ENCODE measurements at regions of chr5 and their contacts with region 1.

Region 1: GRCh38 chr5:149852641-149853330 is 91.8 kb downstream of the PDE6A start:
- DNase-seq: peak; percentile 76 to 77
- ATAC-seq: peak; percentile 86 to 94
- H3K4me3 ChIP-seq: no peak overlapping the region
- H3K27ac ChIP-seq: peak overlapping the region; percentile 34 to 42; a peak in 2 of 6 replicates
- H3K4me1 ChIP-seq: peaks cover 13% of the 10 kb centered on the region
- CTCF ChIP-seq: peak; percentile 89
- EP300 ChIP-seq: no peak
- POLR2A ChIP-seq: no peak
- RAD21 ChIP-seq: peak; percentile 62 to 70

Region 2: DNA sequence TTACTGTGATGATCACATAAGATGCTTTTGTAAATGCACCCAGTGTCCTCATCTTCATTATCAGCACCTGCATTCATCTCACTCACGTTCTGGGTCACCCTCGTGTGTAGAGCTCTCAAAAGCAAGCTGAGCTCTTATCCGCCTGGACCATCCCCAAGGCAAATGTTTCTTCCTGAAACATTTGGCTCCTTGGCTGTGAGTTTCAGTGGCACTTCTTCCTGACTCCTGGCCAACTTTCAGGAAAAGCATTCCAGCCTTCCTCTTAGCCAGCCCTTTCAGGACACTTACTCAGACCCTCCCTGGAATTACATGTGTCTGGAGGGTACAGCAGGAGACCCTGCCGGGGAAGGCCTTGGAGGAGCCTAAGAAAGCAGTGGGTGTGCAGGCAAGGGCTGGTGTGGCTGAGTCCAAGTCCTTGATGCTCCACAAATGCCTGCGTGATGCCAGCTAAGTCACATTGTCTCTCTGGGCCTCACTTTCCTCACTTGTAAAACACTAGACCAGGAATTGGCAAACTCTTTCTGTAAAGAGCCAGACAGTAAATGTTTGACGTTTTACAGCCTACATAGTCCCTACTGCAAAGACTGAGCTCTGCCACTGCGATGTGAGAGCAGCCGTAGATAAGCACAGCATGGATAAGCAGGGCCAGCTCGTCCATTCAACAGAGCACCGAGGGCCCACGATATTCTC is 19.7 kb after region 1 on chr5:
- CTCF ChIA-PET with region 1: interaction called, 768 read pairs
- POLR2A ChIA-PET with region 1: no interaction called
- DNase-seq: no peak
- ATAC-seq: no peak
- H3K4me3 ChIP-seq: no peak overlapping the region
- H3K27ac ChIP-seq: no peak overlapping the region
- H3K4me1 ChIP-seq: peaks cover 5% of the 10 kb centered on the region; the same call in 1 of the 3 replicates
- CTCF ChIP-seq: no peak
- EP300 ChIP-seq: no peak
- POLR2A ChIP-seq: no peak
- RAD21 ChIP-seq: no peak

Region 3: DNA sequence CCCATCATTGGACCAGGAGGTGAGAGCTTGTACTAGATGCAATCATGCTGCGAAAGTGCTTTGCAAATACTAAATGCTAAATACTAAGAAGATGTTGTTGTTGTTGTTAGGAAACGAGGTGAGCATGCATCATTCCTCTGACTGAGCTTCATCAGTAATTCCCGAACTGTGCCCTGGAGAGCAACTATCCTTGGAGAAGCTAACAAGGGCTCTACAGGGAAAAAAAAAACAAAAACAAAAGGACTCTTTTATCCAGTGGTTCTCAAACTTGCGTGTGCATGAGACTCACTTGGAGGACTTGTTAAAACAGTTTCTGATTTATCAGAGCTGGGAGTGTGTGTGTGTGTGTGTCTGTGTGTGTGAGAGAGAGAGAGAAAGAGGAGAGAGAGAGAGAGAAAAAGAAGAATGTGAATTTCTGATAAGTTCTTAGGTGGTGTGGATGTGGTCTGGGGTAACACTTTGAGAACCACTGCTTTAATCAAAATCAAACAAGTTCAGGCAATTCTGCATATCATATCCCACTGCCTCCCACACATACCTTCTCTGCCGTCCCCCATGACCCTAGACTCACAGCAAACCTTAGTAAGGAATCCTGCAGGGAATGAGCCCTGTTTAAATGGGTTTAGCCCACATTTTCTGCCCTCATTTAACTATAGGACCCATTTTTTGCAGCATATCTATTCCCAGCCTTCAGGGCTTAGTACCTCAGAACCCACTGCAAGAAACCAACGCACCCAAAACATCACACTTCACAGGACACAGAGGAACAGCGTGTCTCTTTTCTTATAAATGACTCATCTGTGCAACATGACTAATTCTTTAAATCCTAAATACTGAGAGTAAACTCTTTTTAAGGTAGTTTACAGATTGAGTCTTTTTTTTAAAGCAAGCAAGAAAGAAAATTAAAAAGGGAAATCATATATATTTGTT is 42.9 kb after region 1 on chr5:
- CTCF ChIA-PET with region 1: interaction called, 11 read pairs
- POLR2A ChIA-PET with region 1: no interaction called
- DNase-seq: no peak
- ATAC-seq: peak; percentile 28 to 56; a peak in 3 of 6 replicates
- H3K4me3 ChIP-seq: no peak overlapping the region
- H3K27ac ChIP-seq: peak overlapping the region; percentile 39 to 64; a peak in 2 of 6 replicates
- H3K4me1 ChIP-seq: peaks cover 14% of the 10 kb centered on the region; the same call in 2 of the 3 replicates
- CTCF ChIP-seq: no peak
- EP300 ChIP-seq: no peak
- POLR2A ChIP-seq: no peak
- RAD21 ChIP-seq: no peak

Region 4: GRCh38 chr5:149932445-149933350 is 79.9 kb after region 1 on chr5:
- CTCF ChIA-PET with region 1: interaction called, 54 read pairs
- POLR2A ChIA-PET with region 1: no interaction called
- DNase-seq: peak; percentile 54 to 69
- ATAC-seq: peak; percentile 95
- H3K4me3 ChIP-seq: peak overlapping the region; percentile 41
- H3K27ac ChIP-seq: peak overlapping the region; percentile 88 to 92
- H3K4me1 ChIP-seq: peaks cover 47% of the 10 kb centered on the region
- CTCF ChIP-seq: peak; percentile 78
- EP300 ChIP-seq: no peak
- POLR2A ChIP-seq: no peak
- RAD21 ChIP-seq: peak; percentile 61 to 72

Region 5: GRCh38 chr5:150006318-150006717 is 153.5 kb after region 1 on chr5:
- CTCF ChIA-PET with region 1: no interaction called
- POLR2A ChIA-PET with region 1: no interaction called
- DNase-seq: no peak
- ATAC-seq: no peak
- H3K4me3 ChIP-seq: no peak overlapping the region
- H3K27ac ChIP-seq: no peak overlapping the region
- H3K4me1 ChIP-seq: peaks cover 13% of the 10 kb centered on the region
- CTCF ChIP-seq: no peak
- EP300 ChIP-seq: no peak
- POLR2A ChIP-seq: no peak
- RAD21 ChIP-seq: no peak